ENCODE measurements at regions of chr6 and their contacts with region 1.

Region 1: DNA sequence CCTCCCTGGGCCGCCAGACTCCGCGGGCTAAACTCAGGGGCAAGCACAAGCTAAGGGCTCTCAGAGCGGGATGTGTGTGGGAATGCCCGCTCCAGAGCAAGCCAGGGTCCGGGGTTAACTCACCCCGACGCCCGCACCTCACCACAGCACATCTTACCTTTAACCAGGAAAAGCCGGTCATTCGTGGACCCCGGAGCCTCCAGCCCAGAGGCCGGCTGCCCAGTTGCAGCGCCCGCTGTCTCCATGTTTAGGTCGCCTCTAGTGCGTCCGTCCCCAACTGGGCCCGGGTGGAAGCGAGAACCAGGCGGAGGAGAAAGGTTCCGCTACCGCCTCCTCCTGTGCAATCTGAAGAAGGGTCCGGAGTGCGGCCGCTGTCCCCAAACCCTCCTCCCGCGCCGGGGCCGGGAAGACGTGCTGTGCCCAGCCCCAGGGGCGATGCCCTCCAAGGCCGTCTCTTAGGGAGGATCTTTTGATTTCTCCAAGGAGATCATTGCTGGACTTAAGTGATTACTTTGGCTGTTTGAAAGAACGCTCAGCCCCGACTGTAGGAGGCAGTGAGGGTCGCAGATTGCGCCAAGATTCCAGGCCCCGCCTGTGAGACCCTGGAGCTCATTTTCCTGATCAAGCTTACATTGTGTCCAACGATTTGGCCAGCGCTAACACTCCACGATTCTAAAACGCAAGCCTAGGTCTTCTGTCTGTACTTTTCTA is at the start of gene TMEM242:
- DNase-seq: peak; percentile 94
- H3K4me3 ChIP-seq: peak within 1 kb of the TSS; percentile 72
- H3K27ac ChIP-seq: peak within 1 kb of the TSS; percentile 86
- H3K4me1 ChIP-seq: peaks cover 8% of the 10 kb centered on the region
- H3K27me3 ChIP-seq: no peaks in the 10 kb centered on the region
- CTCF ChIP-seq: no peak
- total RNA-seq, gene TMEM242: 10.8 to 11.9 TPM

Region 2: GRCh38 chr6:157379656-157380454 is 56.4 kb after region 1 on chr6:
- intact Hi-C with region 1: loop called (anchors 5 kb)
- DNase-seq: peak; percentile 95
- H3K4me3 ChIP-seq: peak overlapping the region; percentile 99
- H3K27ac ChIP-seq: peak overlapping the region; percentile 99
- H3K4me1 ChIP-seq: no peaks in the 10 kb centered on the region
- H3K27me3 ChIP-seq: no peaks in the 10 kb centered on the region
- CTCF ChIP-seq: no peak